ENCODE measurements at regions of chr1 and their contacts with region 1.

Region 1: GRCh38 chr1:9037476-9038337 is 11.5 kb upstream of the SLC2A7 start:
- DNase-seq: no peak
- ATAC-seq: peak in 1 of 4 donors; percentile 21
- H3K4me3 ChIP-seq: no peak overlapping the region
- H3K27ac ChIP-seq: no peak overlapping the region
- H3K4me1 ChIP-seq: no peaks in the 10 kb centered on the region
- H3K27me3 ChIP-seq: no peaks in the 10 kb centered on the region
- CTCF ChIP-seq: no peak

Region 2: DNA sequence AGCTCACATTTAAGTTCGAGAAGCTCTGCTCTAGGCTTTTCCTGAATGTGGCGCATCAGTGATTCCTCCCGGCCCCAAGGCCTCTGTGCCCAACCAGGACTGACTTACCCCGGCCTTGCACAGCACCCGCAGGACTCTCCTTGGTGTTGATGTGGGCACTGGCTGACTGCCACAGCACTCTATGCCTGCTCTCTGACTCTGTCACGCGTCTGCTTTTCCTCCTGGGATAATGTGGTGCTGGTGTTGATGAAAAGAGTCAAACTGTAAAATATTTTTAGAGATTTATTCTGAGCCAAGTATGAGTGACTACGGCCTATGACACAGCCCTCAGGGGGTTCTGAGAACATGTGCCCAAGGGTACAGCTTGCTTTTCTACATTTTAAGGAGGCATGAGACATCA is 47.2 kb after region 1 on chr1:
- intact Hi-C with region 1: loop called in 1 of 2 experiments (anchors 1 kb)
- DNase-seq: no peak
- ATAC-seq: peak in 1 of 4 donors; percentile 24
- H3K4me3 ChIP-seq: no peak overlapping the region
- H3K27ac ChIP-seq: no peak overlapping the region
- H3K4me1 ChIP-seq: no peaks in the 10 kb centered on the region
- H3K27me3 ChIP-seq: no peaks in the 10 kb centered on the region
- CTCF ChIP-seq: no peak

Measured in psoas muscle (tissue), 8 donors.